ENCODE measurements at regions of chr10 and their contacts with region 1.

Region 1: DNA sequence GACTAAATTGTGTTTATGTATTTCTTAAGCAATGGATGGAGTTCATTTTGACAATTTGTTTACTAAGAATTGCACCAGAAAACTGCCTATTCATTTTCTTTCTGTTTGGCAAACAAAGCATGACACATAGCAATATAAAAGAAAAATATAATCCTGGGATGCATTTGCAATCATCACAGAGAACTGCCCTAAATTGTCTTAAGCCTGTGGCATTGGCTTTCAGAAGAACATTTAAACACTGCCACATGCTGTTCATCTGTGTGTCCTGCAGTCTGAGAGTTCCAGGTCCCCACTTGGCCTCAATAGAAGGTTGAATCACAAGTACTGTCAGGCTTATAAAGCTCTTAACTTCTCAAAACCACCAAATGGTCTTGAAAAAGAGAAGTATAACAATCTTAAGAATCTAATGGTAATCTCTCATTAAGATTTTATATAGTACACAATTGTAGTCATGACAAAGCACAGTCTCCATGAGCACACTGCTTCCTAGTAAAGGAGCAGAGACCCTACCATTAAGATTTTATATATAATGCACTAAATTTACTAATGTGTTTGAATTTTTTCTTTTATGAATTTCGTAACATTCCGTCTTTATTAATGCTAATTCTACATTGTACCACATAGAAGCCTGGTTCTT is 29.9 kb downstream of the RNLS start:
- H3K4me3 Mint-ChIP-seq: no peak overlapping the region
- H3K27ac Mint-ChIP-seq: no peak overlapping the region
- H3K4me1 Mint-ChIP-seq: peaks cover 16% of the 10 kb centered on the region
- H3K27me3 Mint-ChIP-seq: no peaks in the 10 kb centered on the region

Region 2: GRCh38 chr10:88386821-88387773 is 166.1 kb before region 1 on chr10:
- intact Hi-C with region 1: loop called (anchors 5 kb)
- H3K4me3 Mint-ChIP-seq: no peak overlapping the region
- H3K27ac Mint-ChIP-seq: no peak overlapping the region
- H3K4me1 Mint-ChIP-seq: peaks cover 6% of the 10 kb centered on the region
- H3K27me3 Mint-ChIP-seq: no peaks in the 10 kb centered on the region

Region 3: DNA sequence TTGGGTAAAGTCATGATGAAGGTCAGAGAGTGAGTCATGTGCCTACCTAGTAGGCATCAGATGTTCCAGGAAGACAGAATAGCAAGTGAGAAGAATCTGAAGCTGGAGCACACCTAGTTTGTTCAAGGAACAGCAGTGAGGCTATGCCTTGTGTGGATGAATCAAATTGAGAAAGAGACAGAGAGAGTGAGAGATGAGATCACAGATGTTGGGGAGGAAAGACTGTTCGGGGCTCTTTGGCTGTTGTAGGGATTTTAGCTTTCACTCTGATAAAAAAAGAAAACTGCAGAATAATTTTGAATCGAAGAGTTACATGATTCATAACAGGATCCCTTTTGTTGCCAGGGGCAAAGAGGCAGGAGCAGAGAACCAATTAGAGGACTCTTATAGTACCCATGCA is 117.3 kb after region 1 on chr10:
- intact Hi-C with region 1: no loop called
- H3K4me3 Mint-ChIP-seq: no peak overlapping the region
- H3K27ac Mint-ChIP-seq: no peak overlapping the region
- H3K4me1 Mint-ChIP-seq: no peaks in the 10 kb centered on the region
- H3K27me3 Mint-ChIP-seq: peaks cover 4% of the 10 kb centered on the region

Region 4: GRCh38 chr10:88810196-88810961 is 257.1 kb after region 1 on chr10:
- intact Hi-C with region 1: no loop called
- H3K4me3 Mint-ChIP-seq: no peak overlapping the region
- H3K27ac Mint-ChIP-seq: no peak overlapping the region
- H3K4me1 Mint-ChIP-seq: peaks cover 5% of the 10 kb centered on the region
- H3K27me3 Mint-ChIP-seq: peaks cover 8% of the 10 kb centered on the region

Measured in dendritic cell treated with granulocyte-macrophage colony-stimulating factor and Interleukin-4, amounts not matched to agents 40 ng/mL and 50 ng/mL, for 4 days (primary cell).